A673 (cell line): ENCODE measurements at regions of chr2 and their contacts with region 1.

Region 1: DNA sequence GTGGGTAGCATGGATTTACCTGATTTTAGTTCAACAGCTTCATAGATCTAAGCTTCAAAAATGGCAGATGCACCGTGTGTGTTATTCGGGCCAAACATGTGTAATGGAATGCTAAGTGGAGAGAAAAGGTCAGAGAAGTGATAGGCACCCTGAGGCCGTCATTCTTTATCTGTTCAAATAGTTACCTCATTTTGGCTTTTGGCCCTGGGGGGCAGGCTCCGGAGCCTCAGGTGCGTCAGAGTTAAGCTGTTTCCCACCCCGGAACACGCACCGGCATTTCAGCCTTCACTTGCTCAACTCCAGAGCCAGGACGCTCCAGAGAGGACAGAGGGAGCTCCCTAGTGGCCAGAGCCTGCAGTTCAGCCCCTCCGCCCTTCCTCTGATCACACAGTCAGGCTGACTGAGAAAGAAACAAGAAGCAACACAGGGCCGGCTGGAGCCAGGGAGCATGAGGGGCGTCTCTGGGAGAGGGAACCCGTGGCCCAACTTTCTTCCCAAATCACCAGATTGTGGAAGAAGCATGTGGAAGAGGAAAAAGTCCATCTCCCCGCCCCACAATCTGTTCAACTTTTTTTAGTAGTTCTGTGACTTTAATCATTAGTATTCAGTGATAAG is 135.2 kb upstream of the EPC2 start:
- DNase-seq: peak; percentile 89
- H3K4me3 ChIP-seq: peak overlapping the region; percentile 25
- H3K27ac ChIP-seq: no peak overlapping the region
- H3K4me1 ChIP-seq: no peaks in the 10 kb centered on the region
- H3K27me3 ChIP-seq: no peaks in the 10 kb centered on the region
- CTCF ChIP-seq: peak; percentile 97

Region 2: DNA sequence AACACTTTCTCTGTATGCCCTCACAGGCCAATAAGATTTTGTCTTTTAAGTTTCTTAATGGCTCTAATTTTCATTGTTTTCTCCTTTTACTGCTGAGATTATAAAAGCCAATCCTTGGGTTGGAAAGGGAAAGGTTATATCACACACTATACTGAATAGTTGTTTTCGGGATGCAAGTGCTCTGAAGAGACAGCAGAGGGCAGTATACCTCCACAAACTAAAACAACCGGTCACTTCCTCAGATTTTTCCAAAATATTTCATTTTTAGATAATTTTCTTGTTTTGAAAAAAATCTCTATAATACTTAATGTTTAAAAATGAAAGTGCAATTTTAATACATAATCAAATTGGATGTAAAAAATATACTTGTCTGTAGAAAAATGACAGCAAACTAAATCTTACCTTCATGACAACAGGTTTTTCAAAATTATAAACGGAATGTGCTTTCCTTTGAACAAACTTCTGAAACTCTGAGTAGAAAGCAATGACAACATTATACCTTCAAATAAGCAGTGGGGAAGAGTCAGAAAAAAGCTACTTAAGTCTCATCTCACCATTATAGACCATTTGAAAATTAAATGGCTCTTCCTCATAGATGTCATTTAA is 571.5 kb before region 1 on chr2:
- CTCF ChIA-PET with region 1: no interaction called
- POLR2A ChIA-PET with region 1: no interaction called
- intact Hi-C with region 1: loop called (anchors 2 kb)
- DNase-seq: peak; percentile 52
- H3K4me3 ChIP-seq: no peak overlapping the region
- H3K27ac ChIP-seq: no peak overlapping the region
- H3K4me1 ChIP-seq: no peaks in the 10 kb centered on the region
- H3K27me3 ChIP-seq: no peaks in the 10 kb centered on the region
- CTCF ChIP-seq: peak; percentile 88

Region 3: GRCh38 chr2:147989809-147990403 is 519.5 kb before region 1 on chr2:
- CTCF ChIA-PET with region 1: interaction called, 7 read pairs
- POLR2A ChIA-PET with region 1: no interaction called
- intact Hi-C with region 1: loop called (anchors 1 kb)
- DNase-seq: peak; percentile 63
- H3K4me3 ChIP-seq: no peak overlapping the region
- H3K27ac ChIP-seq: no peak overlapping the region
- H3K4me1 ChIP-seq: no peaks in the 10 kb centered on the region
- H3K27me3 ChIP-seq: no peaks in the 10 kb centered on the region
- CTCF ChIP-seq: peak; percentile 80

Region 4: GRCh38 chr2:148209603-148210002 is 299.8 kb before region 1 on chr2:
- CTCF ChIA-PET with region 1: no interaction called
- POLR2A ChIA-PET with region 1: no interaction called
- intact Hi-C with region 1: loop called (anchors 5 kb)
- DNase-seq: peak; percentile 45
- H3K4me3 ChIP-seq: no peak overlapping the region
- H3K27ac ChIP-seq: no peak overlapping the region
- H3K4me1 ChIP-seq: no peaks in the 10 kb centered on the region
- H3K27me3 ChIP-seq: no peaks in the 10 kb centered on the region
- CTCF ChIP-seq: no peak

Region 5: DNA sequence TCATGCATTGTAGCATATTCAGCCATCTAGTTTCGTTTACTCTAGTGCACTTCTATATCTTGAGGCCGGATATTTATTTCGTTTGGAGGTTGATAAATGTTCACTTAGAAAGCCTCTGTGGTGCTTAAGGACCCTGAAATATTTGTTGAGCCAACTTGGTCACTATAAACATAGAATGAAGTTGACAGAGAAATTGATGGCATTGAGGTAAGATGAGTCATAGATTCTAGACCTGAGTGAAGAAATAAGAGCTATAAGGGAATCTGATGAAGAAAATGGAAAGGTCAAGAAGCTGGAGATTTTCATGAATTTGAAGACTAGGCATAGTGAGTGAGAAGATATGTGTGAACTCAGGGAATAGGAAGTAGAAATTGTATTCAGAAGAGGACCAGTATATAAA is 171.1 kb after region 1 on chr2:
- CTCF ChIA-PET with region 1: no interaction called
- POLR2A ChIA-PET with region 1: no interaction called
- intact Hi-C with region 1: no loop called
- DNase-seq: no peak
- H3K4me3 ChIP-seq: no peak overlapping the region
- H3K27ac ChIP-seq: no peak overlapping the region
- H3K4me1 ChIP-seq: peaks cover 12% of the 10 kb centered on the region
- H3K27me3 ChIP-seq: no peaks in the 10 kb centered on the region
- CTCF ChIP-seq: no peak